H1 (cell line): ENCODE measurements at regions of chr17 and their contacts with region 1.

Region 1: DNA sequence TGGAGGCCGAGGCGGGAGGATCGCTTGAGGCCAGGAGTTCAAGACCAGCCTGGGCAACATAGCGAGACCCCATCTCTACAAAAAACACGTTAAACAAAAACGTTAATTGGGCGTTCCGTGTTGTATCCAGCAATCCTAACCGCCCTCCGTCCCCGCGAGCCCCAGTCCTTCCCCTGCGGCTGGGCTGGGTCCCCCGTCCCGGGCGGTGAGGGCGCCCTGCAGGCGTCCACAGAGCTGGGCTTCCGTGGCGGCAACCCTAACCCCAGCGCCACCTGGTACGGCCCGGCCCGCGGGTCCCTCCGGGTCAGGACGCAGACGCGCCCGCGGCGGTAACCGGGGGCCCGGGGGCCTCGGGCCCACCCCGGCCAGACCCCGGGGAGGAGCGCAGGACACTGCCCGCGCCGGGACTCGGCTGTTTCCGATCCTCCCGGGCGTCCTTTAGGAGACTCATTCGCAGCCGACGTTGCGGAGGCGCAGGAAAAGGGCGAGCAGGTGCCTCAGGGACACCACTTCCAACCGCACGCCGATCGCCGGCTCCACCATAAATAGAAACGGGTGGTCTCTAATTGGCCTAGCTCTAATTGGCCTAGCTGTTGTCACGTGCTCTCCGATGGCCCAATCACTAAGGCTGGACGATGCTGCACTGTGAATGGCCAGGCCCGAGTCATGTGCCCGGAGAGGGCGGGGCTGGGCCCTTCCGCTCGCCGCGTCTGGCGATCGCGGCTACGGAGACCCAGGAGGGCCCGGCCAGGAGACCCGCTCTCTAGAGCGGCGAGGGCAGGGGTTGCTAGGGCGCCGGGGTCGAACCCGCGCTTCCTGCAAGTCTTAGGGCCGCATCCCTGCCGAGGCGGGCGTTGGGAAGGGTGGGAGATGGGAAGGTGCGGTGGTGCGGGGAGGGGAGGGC is 19.0 kb upstream of the CSNK1D start:
- DNase-seq: peak; percentile 91 to 92
- H3K4me3 ChIP-seq: peak overlapping the region; percentile 57 to 98 (median 72)
- H3K27ac ChIP-seq: peak overlapping the region; percentile 69
- H3K4me1 ChIP-seq: peaks cover 0 to 13% (median 2%) of the 10 kb centered on the region in 4 experiments; a peak in 4 of 7 replicates
- H3K27me3 ChIP-seq: peaks cover 0 to 7% (median 4%) of the 10 kb centered on the region in 4 experiments; a peak in 3 of 7 replicates
- CTCF ChIP-seq: no peak
- EP300 ChIP-seq: no peak
- POLR2A ChIP-seq: peak in 1 of 2 experiments; percentile 76; a peak in 2 of 3 replicates
- RAD21 ChIP-seq: no peak

Region 2: GRCh38 chr17:82273327-82274133 is 19.0 kb before region 1 on chr17 and contains the start of gene CSNK1D:
- CTCF ChIA-PET with region 1: interaction called, 3 read pairs
- POLR2A ChIA-PET with region 1: interaction called, 41 read pairs
- DNase-seq: peak in 1 of 2 experiments; percentile 97
- H3K4me3 ChIP-seq: peak within 1 kb of the TSS; percentile 84 to 95 (median 89)
- H3K27ac ChIP-seq: peak within 1 kb of the TSS; percentile 95; the same call in 1 of the 2 replicates
- H3K4me1 ChIP-seq: peaks cover 0 to 30% (median 7%) of the 10 kb centered on the region in 4 experiments; a peak in 6 of 7 replicates
- H3K27me3 ChIP-seq: peaks cover 0 to 5% (median 5%) of the 10 kb centered on the region in 4 experiments; a peak in 3 of 7 replicates
- CTCF ChIP-seq: no peak
- EP300 ChIP-seq: 0 out of 3 replicates have a peak, but pooled peaks of 1 of the 2 experiments have one; percentile 30
- POLR2A ChIP-seq: peak in 1 of 2 experiments; percentile 70; a peak in 1 of 3 replicates
- RAD21 ChIP-seq: no peak
- total RNA-seq, gene CSNK1D: 103 and 107 TPM in 2 replicates

Region 3: GRCh38 chr17:82302991-82303943 is 10.8 kb after region 1 on chr17:
- CTCF ChIA-PET with region 1: no interaction called
- POLR2A ChIA-PET with region 1: interaction called, 18 read pairs
- DNase-seq: peak in 1 of 2 experiments; percentile 47
- H3K4me3 ChIP-seq: no peak overlapping the region
- H3K27ac ChIP-seq: no peak overlapping the region
- H3K4me1 ChIP-seq: peaks cover 0 to under 1% (median 0%) of the 10 kb centered on the region in 4 experiments; a peak in 1 of 7 replicates
- H3K27me3 ChIP-seq: no peaks in the 10 kb centered on the region
- CTCF ChIP-seq: no peak
- EP300 ChIP-seq: no peak
- POLR2A ChIP-seq: no peak
- RAD21 ChIP-seq: no peak